ENCODE measurements at regions of chr2 and their contacts with region 1.

Region 1: DNA sequence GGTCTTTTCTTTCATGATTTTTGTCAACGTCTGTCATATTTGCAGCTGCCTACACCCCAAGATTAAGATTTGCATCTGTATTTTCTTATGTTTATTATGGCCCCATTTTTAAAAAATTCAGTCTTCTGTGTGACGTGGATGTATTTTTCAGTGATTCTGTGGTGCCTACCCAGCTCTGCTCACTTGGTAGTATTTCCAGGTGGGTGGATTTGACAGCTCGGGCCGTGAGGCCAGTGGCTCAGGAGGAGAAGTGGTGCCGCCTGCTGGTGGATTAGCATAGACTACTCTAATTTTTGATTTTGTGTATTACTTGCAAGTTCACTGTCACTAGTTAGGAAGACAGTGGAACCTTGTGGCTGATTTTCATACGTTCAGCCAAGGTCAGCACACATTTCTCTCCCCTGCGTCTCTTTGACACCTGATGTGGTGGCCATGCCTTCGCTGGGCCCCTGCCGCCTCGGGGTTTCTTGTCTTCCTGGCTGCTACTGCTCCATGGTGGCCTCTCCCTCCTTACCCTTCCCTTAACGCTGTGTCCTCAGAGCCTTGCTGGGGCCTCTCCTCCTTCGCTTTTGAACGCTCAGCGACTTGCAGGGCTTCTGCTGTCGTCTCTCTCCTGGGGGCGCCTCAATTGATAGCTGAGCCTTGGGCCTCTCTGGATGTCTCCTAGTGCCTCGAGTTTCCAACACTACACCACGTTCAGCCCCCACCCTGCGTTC is 89.3 kb downstream of the DGKD start:
- DNase-seq: peak; percentile 60 to 89 (median 82)
- ATAC-seq: peak; percentile 96
- H3K4me3 ChIP-seq: no peak overlapping the region
- H3K4me3 Mint-ChIP-seq: peak overlapping the region in 3 of 10 donors; percentile 1 to 51 (median 19)
- H3K27ac ChIP-seq: peak overlapping the region; percentile 30
- H3K27ac Mint-ChIP-seq: peak overlapping the region; percentile 65 to 88 (median 80)
- H3K4me1 ChIP-seq: peaks cover 0 to 3% of the 10 kb centered on the region in 2 donors
- H3K4me1 Mint-ChIP-seq: peaks cover 16 to 42% (median 34%) of the 10 kb centered on the region in 7 donors
- H3K27me3 ChIP-seq: no peaks in the 10 kb centered on the region
- H3K27me3 Mint-ChIP-seq: no peaks in the 10 kb centered on the region

Region 2: GRCh38 chr2:233331536-233331935 is 112.1 kb before region 1 on chr2:
- CTCF ChIA-PET with region 1: interaction called, 3 read pairs
- POLR2A ChIA-PET with region 1: interaction called, 3 read pairs
- intact Hi-C with region 1: loop called in 1 of 2 experiments (anchors 1 kb)
- DNase-seq: peak; percentile 45 to 89 (median 83)
- ATAC-seq: peak; percentile 96
- H3K4me3 ChIP-seq: peak overlapping the region; percentile 17
- H3K4me3 Mint-ChIP-seq: peak overlapping the region; percentile 65 to 82 (median 73)
- H3K27ac ChIP-seq: peak overlapping the region; percentile 75
- H3K27ac Mint-ChIP-seq: peak overlapping the region; percentile 94 to 99 (median 98)
- H3K4me1 ChIP-seq: peaks cover 46 to 58% of the 10 kb centered on the region in 2 donors
- H3K4me1 Mint-ChIP-seq: peaks cover 33 to 64% (median 51%) of the 10 kb centered on the region in 7 donors
- H3K27me3 ChIP-seq: no peaks in the 10 kb centered on the region
- H3K27me3 Mint-ChIP-seq: peaks cover 0 to 2% (median 0%) of the 10 kb centered on the region in 5 donors

Region 3: GRCh38 chr2:233387667-233388528 is 55.7 kb before region 1 on chr2:
- CTCF ChIA-PET with region 1: interaction called, 7 read pairs
- POLR2A ChIA-PET with region 1: interaction called, 5 read pairs
- intact Hi-C with region 1: loop called in 1 of 2 experiments (anchors 1 kb)
- DNase-seq: no peak
- ATAC-seq: no peak
- H3K4me3 ChIP-seq: no peak overlapping the region
- H3K4me3 Mint-ChIP-seq: peak overlapping the region in 5 of 10 donors; percentile 7 to 73 (median 65)
- H3K27ac ChIP-seq: no peak overlapping the region
- H3K27ac Mint-ChIP-seq: peak overlapping the region in 6 of 9 donors; percentile 32 to 98 (median 91)
- H3K4me1 ChIP-seq: peaks cover 44 to 47% of the 10 kb centered on the region in 2 donors
- H3K4me1 Mint-ChIP-seq: peaks cover 39 to 76% (median 62%) of the 10 kb centered on the region in 7 donors
- H3K27me3 ChIP-seq: no peaks in the 10 kb centered on the region
- H3K27me3 Mint-ChIP-seq: no peaks in the 10 kb centered on the region

Region 4: DNA sequence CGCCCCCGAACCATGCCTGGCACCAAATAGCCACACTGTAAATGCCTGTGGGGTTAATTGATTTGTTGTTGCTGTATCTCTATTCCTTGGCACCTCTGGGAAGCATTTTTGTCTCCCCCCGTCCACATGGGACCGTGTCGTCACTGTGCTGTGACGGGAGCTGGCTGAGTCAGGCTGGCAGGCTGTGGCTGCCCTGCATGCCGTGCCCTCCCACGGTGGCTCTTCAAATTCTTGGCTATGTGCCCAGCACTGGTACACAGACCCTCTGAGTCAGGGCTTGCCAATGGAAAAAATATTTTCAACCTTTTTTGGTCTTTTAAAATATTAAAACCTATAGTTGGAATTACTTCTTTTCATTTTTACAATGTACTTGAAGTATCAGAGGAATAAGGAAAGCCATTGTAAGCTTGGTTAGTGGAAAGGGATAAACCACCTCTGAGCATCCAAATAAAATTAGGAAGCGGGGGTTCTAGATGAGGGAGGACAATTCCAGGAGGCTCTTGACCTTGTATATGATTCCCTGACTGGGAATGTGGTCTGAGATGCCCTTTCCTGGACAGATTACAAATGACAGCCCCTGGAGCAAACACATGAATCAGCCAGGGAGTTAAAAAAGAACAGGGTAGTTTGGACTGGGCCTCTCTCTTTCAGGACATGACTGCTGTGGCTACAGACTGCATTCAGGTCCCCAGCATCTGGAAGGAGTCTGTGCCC is 29.9 kb before region 1 on chr2:
- CTCF ChIA-PET with region 1: interaction called, 379 read pairs
- POLR2A ChIA-PET with region 1: interaction called, 127 read pairs
- intact Hi-C with region 1: loop called in 1 of 2 experiments (anchors 1 kb)
- DNase-seq: peak in 3 of 9 donors; percentile 12 to 70 (median 14)
- ATAC-seq: peak; percentile 33
- H3K4me3 ChIP-seq: no peak overlapping the region
- H3K4me3 Mint-ChIP-seq: peak overlapping the region in 9 of 10 donors; percentile 23 to 71 (median 54)
- H3K27ac ChIP-seq: peak overlapping the region; percentile 52
- H3K27ac Mint-ChIP-seq: peak overlapping the region; percentile 42 to 96 (median 90)
- H3K4me1 ChIP-seq: peaks cover 49 to 91% of the 10 kb centered on the region in 2 donors
- H3K4me1 Mint-ChIP-seq: peaks cover 61 to 100% (median 95%) of the 10 kb centered on the region in 7 donors
- H3K27me3 ChIP-seq: no peaks in the 10 kb centered on the region
- H3K27me3 Mint-ChIP-seq: no peaks in the 10 kb centered on the region

Region 5: DNA sequence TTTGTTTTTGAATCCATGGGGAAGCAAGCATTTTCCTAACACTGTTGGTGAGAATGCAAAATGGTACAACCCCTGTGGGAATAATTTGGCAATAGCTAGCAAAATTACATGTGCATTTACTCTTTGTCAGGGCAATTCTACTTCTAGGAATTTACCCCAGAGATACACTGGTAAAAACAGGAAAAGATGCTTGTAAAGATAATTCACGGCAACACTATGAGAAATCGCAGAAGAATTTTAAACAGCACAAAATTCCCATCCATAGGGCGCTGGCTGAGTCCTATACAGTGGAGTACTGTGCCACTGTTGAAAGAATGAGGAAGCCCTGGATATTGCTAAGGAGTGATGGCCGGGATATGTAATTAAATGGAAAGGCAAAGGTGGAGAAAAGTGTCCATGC is 13.5 kb before region 1 on chr2:
- CTCF ChIA-PET with region 1: interaction called, 156 read pairs
- POLR2A ChIA-PET with region 1: interaction called, 127 read pairs
- intact Hi-C with region 1: no loop called
- DNase-seq: no peak
- ATAC-seq: no peak
- H3K4me3 ChIP-seq: no peak overlapping the region
- H3K4me3 Mint-ChIP-seq: peak overlapping the region in 9 of 10 donors; percentile 6 to 66 (median 49)
- H3K27ac ChIP-seq: no peak overlapping the region
- H3K27ac Mint-ChIP-seq: peak overlapping the region in 8 of 9 donors; percentile 20 to 90 (median 78)
- H3K4me1 ChIP-seq: peaks cover 0 to 55% of the 10 kb centered on the region in 2 donors
- H3K4me1 Mint-ChIP-seq: peaks cover 39 to 91% (median 85%) of the 10 kb centered on the region in 7 donors
- H3K27me3 ChIP-seq: no peaks in the 10 kb centered on the region
- H3K27me3 Mint-ChIP-seq: no peaks in the 10 kb centered on the region

Measured in naive thymus-derived CD4-positive, alpha-beta T cell (primary cell).